Activated B cell treated with CpG ODN at 0.5 μM for 24 hours (primary cell): ENCODE measurements at regions of chr9 and their contacts with region 1.

Region 1: GRCh38 chr9:136109351-136110081 is 9.2 kb downstream of the TMEM250 start:
- DNase-seq: peak; percentile 73
- ATAC-seq: peak; percentile 92
- H3K4me3 Mint-ChIP-seq: peak overlapping the region; percentile 77
- H3K27ac Mint-ChIP-seq: no peak overlapping the region
- H3K4me1 Mint-ChIP-seq: peaks cover 36% of the 10 kb centered on the region
- H3K27me3 Mint-ChIP-seq: peaks cover 3% of the 10 kb centered on the region
- CTCF ChIP-seq: no peak

Region 2: DNA sequence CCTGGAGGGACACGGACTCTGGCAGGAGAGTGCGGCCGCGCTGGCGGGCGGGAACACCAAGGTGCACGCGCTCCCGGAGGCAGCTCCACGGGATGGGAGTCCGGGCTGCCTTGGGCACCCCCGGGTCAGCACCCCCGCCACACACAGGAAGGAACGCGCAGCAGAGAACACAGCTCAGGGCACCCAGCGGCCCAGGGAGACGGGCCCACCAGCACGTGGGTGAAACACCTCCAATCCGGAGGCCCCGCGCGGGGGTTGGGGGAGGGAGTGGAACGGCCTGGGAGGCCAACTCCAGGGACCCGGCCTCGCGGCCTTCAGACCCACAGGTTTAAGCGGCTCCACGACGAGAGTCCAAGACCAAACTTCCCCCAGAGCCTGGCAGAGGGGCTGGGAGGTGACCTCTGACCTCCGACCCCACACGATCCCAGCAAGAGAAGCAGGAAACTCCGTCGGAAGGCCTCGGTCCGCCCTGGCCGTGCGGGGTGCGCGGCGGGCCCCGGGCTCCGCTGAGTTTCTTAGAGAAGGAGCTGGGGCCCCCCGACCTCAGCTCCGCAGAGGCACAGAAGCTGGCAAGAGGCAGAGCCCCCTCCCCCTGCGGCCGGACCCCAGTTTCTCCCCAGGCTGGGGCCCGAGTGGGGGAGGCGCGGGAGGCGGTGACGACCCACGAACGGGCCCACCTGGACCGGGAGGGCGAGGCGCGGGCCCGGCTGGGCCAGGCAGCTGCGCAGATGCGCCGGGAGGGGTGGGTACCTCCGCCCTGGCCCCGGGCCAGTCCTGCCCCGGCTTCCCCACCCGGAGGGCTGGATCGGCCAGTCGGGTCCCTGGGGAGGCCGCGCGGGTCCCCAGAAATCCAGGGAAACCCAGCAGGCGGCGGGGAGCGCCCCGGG is 15.3 kb before region 1 on chr9:
- CTCF ChIA-PET with region 1: no interaction called
- POLR2A ChIA-PET with region 1: interaction called, 3 read pairs
- intact Hi-C with region 1: loop called (anchors 2 kb)
- DNase-seq: no peak
- ATAC-seq: peak; percentile 65
- H3K4me3 Mint-ChIP-seq: peak overlapping the region; percentile 71
- H3K27ac Mint-ChIP-seq: no peak overlapping the region
- H3K4me1 Mint-ChIP-seq: peaks cover 3% of the 10 kb centered on the region
- H3K27me3 Mint-ChIP-seq: peaks cover 33% of the 10 kb centered on the region
- CTCF ChIP-seq: no peak

Region 3: DNA sequence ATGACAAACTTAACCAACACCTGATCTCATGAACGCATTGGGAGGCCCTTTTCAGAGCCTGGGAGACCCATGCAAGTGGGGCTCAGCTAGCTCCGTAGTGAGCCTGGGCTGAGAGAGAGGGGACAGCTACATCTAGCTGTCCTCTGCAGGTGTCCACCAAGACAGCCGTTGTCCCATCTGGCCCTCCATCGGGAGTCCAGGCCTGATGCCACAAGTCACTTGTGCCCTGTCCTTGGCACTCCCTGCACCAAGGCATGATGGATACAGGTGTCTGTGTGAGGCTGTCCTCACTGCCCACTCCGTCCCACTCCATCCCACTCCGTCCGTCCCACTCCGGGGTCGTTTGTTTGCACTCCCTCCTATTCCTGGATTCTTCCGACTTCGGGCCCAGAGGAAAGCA is 759.1 kb after region 1 on chr9:
- CTCF ChIA-PET with region 1: no interaction called
- POLR2A ChIA-PET with region 1: no interaction called
- intact Hi-C with region 1: no loop called
- DNase-seq: no peak
- ATAC-seq: no peak
- H3K4me3 Mint-ChIP-seq: no peak overlapping the region
- H3K27ac Mint-ChIP-seq: no peak overlapping the region
- H3K4me1 Mint-ChIP-seq: peaks cover 15% of the 10 kb centered on the region
- H3K27me3 Mint-ChIP-seq: no peaks in the 10 kb centered on the region
- CTCF ChIP-seq: no peak